ENCODE measurements at regions of chr5 and their contacts with region 1.

Region 1: DNA sequence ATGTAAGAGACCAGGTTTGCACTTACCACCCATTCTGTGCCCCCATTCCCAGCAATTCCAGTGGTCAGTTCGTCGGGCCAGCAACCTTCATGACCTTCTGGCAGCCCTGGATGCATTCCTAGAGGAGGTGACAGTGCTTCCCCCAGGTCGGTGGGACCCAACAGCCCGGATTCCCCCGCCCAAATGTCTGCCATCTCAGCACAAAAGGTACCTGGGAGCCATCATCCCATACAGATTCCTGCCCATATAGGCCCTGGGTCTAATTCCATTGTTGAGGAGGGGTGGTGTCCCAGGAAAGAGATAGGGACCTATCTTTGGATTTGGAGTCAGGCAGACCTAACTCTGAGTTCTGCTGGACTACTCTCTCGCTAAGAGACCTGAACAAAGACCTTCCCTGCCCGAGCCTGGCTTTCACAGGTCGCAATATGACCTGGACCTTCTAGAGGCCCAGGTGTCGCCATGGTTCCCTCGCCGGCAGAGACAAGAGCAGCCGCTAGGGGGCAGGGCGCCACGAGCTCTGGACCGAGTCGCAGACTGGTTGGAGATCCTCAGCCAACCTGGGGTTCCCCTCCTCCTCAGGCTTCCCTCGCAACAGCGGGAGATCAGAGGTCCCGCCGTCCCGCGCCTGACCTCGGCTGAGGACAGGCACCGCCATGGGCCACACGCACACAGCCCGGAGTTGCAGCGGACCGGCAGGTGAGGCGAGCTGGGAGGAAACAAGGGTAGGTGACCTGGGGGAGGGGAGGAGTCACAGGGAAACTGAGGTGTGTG is 3.1 kb downstream of the SLC4A9 start:
- DNase-seq: peak; percentile 86 to 89 (median 89)
- ATAC-seq: peak; percentile 89 to 97 (median 94)
- H3K4me3 ChIP-seq: peak overlapping the region in 2 of 3 donors; percentile 34 to 44
- H3K27ac ChIP-seq: no peak overlapping the region
- H3K4me1 ChIP-seq: peaks cover 0 to 4% (median 0%) of the 10 kb centered on the region in 4 donors
- H3K27me3 ChIP-seq: no peaks in the 10 kb centered on the region
- CTCF ChIP-seq: peak; percentile 87 to 99 (median 96)
- POLR2A ChIP-seq: no peak

Region 2: GRCh38 chr5:140251527-140251973 is 111.5 kb before region 1 on chr5:
- intact Hi-C with region 1: no loop called
- DNase-seq: no peak
- ATAC-seq: peak in 3 of 4 donors; percentile 24 to 54 (median 33)
- H3K4me3 ChIP-seq: no peak overlapping the region
- H3K27ac ChIP-seq: no peak overlapping the region
- H3K4me1 ChIP-seq: no peaks in the 10 kb centered on the region
- H3K27me3 ChIP-seq: no peaks in the 10 kb centered on the region
- CTCF ChIP-seq: no peak
- POLR2A ChIP-seq: no peak

Region 3: DNA sequence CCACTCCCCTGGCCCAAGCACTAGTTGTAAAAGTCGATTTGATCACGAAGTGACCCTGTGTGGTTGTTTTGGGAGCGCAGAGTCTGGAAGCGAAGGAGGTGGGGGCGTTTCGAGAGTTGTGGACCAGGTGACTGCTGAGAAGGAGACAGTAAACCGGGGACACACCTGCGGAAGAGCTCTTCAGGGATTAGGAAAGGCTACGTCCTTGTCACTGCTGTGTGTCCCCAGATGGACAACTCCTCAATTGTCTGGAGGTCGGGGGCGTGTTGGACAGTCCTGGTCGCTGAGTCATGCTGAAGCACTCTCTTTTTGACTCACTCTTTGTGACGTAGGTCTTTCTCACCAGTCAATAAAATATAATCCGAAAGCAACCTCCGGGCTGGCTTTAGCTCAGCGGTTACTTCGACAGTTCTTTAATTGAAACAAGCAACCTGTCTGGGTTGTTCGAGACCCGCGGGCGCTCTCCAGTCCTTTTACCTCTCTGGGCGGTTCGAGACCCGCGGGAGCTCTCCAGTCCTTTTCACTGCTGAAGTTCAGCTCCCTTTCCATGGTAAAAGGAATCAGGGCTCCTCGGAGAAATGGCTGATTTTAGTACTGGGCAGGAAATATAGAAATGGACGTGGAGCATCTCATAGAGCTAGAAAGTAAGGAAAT is 348.0 kb after region 1 on chr5:
- intact Hi-C with region 1: loop called in 1 of 2 experiments (anchors 10 kb)
- DNase-seq: peak; percentile 89 to 91 (median 89)
- ATAC-seq: peak; percentile 95
- H3K4me3 ChIP-seq: peak overlapping the region; percentile 55 to 64 (median 61)
- H3K27ac ChIP-seq: peak overlapping the region; percentile 72 to 93 (median 89)
- H3K4me1 ChIP-seq: no peaks in the 10 kb centered on the region
- H3K27me3 ChIP-seq: no peaks in the 10 kb centered on the region
- CTCF ChIP-seq: no peak
- POLR2A ChIP-seq: peak; percentile 72